Dorsolateral prefrontal cortex (tissue), 120 donors: ENCODE measurements at regions of chr19 and their contacts with region 1.

Region 1: GRCh38 chr19:37197768-37198167 is 12.6 kb downstream of the ZNF585B start:
- DNase-seq: no peak
- H3K4me3 ChIP-seq: no peak overlapping the region
- H3K27ac ChIP-seq: no peak overlapping the region
- H3K27me3 ChIP-seq: no peaks in the 10 kb centered on the region
- CTCF ChIP-seq: no peak

Region 2: DNA sequence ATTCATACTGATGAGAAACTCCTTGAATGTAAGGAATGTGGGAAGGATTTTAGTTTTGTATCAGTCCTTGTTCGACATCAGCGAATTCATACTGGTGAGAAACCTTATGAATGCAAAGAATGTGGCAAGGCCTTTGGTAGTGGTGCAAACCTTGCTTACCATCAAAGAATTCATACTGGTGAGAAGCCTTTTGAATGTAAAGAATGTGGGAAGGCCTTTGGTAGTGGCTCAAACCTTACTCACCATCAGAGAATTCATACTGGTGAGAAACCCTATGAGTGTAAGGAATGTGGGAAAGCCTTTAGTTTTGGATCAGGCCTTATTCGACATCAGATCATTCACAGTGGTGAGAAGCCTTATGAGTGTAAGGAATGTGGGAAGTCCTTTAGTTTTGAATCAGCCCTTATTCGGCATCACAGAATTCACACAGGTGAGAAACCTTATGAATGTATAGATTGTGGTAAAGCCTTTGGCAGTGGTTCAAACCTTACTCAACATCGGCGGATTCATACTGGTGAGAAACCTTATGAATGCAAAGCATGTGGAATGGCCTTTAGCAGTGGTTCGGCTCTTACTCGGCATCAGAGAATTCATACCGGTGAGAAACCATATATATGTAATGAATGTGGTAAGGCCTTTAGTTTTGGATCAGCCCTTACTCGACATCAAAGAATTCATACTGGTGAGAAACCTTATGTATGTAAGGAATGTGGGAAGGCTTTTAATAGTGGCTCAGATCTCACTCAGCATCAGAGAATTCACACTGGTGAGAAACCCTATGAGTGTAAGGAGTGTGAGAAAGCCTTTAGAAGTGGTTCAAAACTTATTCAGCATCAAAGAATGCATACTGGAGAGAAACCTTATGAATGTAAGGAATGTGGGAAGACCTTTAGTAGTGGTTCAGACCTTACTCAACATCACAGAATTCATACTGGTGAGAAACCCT is 320.5 kb before region 1 on chr19:
- intact Hi-C with region 1: loop called in 1 of 2 experiments (anchors 10 kb)
- DNase-seq: no peak
- H3K4me3 ChIP-seq: peak overlapping the region in 1 of 59 donors; percentile 9
- H3K27ac ChIP-seq: no peak overlapping the region
- H3K27me3 ChIP-seq: no peaks in the 10 kb centered on the region
- CTCF ChIP-seq: no peak

Region 3: DNA sequence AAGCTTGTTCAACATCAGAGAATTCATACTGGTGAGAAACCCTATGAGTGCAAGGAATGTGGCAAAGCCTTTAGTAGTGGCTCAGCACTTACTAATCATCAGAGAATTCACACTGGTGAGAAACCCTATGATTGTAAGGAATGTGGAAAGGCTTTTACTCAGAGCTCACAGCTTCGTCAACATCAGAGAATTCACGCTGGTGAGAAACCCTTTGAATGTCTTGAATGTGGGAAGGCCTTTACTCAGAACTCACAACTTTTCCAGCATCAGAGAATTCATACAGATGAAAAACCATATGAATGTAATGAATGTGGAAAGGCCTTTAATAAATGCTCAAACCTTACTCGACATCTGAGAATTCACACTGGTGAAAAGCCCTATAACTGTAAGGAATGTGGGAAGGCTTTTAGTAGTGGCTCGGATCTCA is 45.5 kb after region 1 on chr19:
- intact Hi-C with region 1: no loop called
- DNase-seq: no peak
- H3K4me3 ChIP-seq: no peak overlapping the region
- H3K27ac ChIP-seq: no peak overlapping the region
- H3K27me3 ChIP-seq: no peaks in the 10 kb centered on the region
- CTCF ChIP-seq: no peak